ENCODE measurements at regions of chr6 and their contacts with region 1.

Region 1: GRCh38 chr6:109009236-109009961 is 85.2 kb downstream of the SESN1 start:
- DNase-seq: peak; percentile 92
- H3K4me3 Mint-ChIP-seq: peak overlapping the region; percentile 95
- H3K27ac Mint-ChIP-seq: peak overlapping the region; percentile 96
- H3K4me1 Mint-ChIP-seq: peaks cover 60% of the 10 kb centered on the region
- H3K27me3 Mint-ChIP-seq: no peaks in the 10 kb centered on the region

Region 2: DNA sequence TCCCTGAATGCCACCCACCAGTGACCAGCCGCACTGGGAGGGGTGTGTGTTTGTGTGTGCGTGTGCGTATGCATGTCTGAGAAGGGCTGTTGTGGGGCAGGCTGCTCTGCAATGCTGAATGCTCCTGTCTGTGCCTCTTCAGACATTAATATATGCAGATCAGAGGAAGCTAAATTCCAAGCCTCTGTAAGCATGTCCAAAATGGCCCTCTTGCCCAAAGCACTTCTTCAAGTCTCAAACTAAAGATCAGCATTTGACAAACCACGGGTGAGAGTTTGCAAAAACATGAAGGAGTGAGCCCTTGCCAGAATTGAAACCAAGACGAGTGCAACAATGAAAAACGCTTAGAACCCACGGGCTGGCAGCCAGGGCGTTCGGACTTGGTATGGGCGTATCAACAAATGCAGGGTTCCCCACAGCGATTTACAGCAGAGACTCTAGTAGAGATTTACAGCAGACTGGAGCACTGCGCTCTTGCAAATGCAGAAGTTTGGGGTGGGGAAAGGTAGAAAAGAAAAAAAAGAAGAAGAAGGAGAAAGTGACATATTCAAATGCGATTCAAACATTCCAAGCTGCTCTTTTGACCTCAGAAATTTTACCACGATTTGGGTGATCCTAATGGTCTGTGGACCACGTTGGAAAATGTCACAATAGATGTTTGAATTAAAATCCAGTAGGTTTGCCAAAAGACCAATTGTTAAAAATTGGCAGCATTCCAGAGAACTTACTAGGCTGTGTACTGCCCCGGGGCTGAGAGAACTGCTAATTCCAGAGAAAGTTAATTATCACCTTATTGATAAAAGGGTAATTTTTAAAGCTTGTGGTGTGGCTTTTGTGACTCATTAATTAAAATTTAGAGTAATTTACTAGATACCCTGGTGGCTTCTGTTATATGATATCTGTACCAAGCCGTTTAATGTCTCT is 1188.8 kb before region 1 on chr6:
- CTCF ChIA-PET with region 1: no interaction called
- intact Hi-C with region 1: loop called (anchors 10 kb)
- DNase-seq: peak; percentile 55
- H3K4me3 Mint-ChIP-seq: peak overlapping the region; percentile 88
- H3K27ac Mint-ChIP-seq: peak overlapping the region; percentile 98
- H3K4me1 Mint-ChIP-seq: peaks cover 83% of the 10 kb centered on the region
- H3K27me3 Mint-ChIP-seq: no peaks in the 10 kb centered on the region

Region 3: DNA sequence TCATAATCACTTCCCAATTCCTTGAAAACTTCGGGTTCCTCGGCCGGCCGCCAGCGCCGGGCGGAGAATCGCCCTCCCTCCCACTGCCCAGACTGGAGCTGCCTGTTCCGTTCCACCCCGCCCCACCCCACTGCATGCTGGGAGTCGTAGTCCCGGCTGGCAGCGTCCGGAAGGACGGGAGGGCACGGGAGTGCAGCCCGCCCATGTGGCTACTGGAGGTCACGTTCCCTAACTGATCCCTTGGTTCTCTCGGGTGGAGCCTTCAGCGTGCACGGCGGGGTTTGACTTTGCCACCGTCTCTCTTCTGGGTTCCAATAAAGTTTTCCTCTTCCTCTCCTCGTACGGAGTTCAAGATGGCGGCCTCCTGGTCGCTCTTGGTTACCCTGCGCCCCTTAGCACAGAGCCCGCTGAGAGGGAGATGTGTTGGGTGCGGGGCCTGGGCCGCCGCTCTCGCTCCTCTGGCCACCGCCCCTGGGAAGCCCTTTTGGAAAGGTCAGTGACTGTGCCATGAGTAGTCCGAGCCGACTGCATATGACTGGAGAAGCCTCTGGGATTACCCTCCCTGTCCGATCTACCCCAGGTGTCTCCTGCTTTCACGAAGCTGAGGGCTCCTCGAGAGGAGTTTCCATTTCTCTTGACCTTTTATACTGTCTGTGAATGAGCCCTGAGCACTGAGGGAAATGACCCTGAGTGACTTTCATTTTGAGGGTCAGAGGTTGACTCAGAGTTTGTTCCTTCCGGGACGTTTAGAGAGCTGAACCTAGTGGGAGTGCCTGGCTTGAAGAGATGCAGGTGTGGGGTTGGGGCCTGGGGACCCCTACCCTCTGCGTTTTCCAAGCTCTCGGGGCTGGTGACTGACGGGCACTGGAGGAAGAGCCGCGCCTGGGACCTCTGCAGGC is 714.4 kb before region 1 on chr6 and contains the start of gene AFG1L:
- CTCF ChIA-PET with region 1: no interaction called
- intact Hi-C with region 1: loop called (anchors 10 kb)
- DNase-seq: peak; percentile 91
- H3K4me3 Mint-ChIP-seq: peak within 1 kb of the TSS; percentile 99
- H3K27ac Mint-ChIP-seq: peak within 1 kb of the TSS; percentile 100
- H3K4me1 Mint-ChIP-seq: peaks cover 19% of the 10 kb centered on the region
- H3K27me3 Mint-ChIP-seq: no peaks in the 10 kb centered on the region
- total RNA-seq, gene AFG1L: 5.4 to 5.9 TPM

Region 4: DNA sequence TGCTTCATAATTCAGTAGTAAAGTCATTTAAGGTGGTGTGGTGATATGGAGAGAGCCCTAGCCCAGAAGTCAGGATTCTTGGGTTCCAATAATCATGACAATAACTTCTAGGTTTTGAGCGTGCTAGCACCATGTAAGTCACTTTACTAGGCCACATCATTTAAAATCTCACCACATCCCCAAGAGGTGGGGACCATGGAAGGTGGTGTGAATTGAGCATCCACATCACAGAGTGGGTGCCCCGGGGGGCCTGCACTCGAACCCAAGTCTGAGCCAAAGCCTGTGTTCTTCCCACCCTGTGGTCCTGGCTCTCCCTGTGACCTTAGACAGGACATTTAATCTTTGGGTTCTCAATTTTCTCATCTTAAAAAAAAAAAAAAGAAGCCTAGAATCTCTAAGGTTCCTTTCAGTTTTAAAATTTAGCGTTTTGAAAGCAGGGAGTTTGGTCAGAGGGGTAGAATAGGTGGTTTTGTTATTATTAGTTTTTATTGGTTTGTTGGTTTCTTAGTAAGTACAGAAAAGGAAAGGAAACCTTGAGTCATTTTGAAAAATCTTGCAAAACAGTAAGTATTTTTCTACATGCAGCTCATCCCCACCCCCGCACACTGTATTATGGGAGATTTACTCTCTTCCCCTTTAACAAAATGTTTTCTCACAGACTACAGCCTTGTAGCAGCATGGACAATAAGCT is 134.8 kb before region 1 on chr6:
- CTCF ChIA-PET with region 1: no interaction called
- intact Hi-C with region 1: loop called (anchors 1 kb)
- DNase-seq: peak; percentile 80
- H3K4me3 Mint-ChIP-seq: peak overlapping the region; percentile 20
- H3K27ac Mint-ChIP-seq: no peak overlapping the region
- H3K4me1 Mint-ChIP-seq: peaks cover 22% of the 10 kb centered on the region
- H3K27me3 Mint-ChIP-seq: peaks cover 2% of the 10 kb centered on the region

Region 5: GRCh38 chr6:108921547-108922361 is 87.6 kb before region 1 on chr6:
- CTCF ChIA-PET with region 1: no interaction called
- intact Hi-C with region 1: loop called (anchors 2 kb)
- DNase-seq: peak; percentile 43
- H3K4me3 Mint-ChIP-seq: no peak overlapping the region
- H3K27ac Mint-ChIP-seq: no peak overlapping the region
- H3K4me1 Mint-ChIP-seq: peaks cover 27% of the 10 kb centered on the region
- H3K27me3 Mint-ChIP-seq: no peaks in the 10 kb centered on the region

Region 6: GRCh38 chr6:109073344-109074132 is 64.1 kb after region 1 on chr6:
- CTCF ChIA-PET with region 1: interaction called, 17 read pairs
- intact Hi-C with region 1: loop called (anchors 1 kb)
- DNase-seq: peak; percentile 66
- H3K4me3 Mint-ChIP-seq: peak overlapping the region; percentile 20
- H3K27ac Mint-ChIP-seq: no peak overlapping the region
- H3K4me1 Mint-ChIP-seq: peaks cover 20% of the 10 kb centered on the region
- H3K27me3 Mint-ChIP-seq: no peaks in the 10 kb centered on the region

Region 7: DNA sequence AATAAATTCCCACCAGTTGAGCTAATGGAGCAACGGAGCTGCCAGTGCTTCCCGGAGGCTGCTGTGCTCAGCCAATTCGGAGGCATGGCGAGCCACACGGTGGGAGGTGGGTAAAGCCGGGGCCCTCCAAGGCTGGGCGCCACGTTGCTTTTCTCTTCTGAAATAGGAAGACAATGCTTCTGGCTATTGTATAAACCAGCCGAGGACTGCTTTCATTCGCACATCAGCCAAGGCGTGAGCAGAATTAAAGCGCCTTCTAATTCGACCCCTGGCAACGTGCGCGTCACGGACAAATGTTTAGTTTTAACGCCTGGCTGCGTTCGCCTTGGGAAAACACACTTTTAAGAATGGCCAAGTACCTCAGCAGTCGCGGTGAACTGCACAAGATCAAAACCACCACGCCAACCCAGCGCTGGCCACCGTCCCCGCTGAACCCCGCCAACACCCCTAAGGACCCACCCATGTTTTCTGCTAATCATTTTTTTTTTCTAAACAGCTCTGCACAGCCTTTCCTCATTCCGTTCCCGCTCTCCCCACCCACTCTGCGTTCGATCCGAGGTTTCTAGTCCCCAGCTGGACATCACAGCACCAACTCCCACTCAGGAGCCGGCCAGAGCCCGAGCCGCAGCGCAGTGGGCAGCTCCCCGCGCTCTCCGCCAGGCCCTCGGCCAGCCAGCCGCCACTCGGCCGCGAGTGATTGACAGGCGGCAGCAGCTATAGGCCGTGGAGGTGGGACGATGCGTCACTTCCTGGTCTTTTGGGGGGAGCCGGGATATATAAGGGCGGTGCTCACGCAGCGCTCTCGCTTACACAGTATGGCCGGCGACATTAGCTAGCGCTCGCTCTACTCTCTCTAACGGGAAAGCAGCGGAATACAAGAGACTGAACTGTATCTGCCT is 1864.8 kb after region 1 on chr6 and contains the start of gene AMD1:
- CTCF ChIA-PET with region 1: no interaction called
- intact Hi-C with region 1: loop called (anchors 10 kb)
- DNase-seq: peak; percentile 94
- H3K4me3 Mint-ChIP-seq: peak within 1 kb of the TSS; percentile 95
- H3K27ac Mint-ChIP-seq: peak within 1 kb of the TSS; percentile 95
- H3K4me1 Mint-ChIP-seq: peaks cover 29% of the 10 kb centered on the region
- H3K27me3 Mint-ChIP-seq: no peaks in the 10 kb centered on the region
- total RNA-seq, gene AMD1: 72.6 to 75.3 TPM

Measured in activated naive CD4-positive, alpha-beta T cell treated with anti-CD3 and anti-CD28 coated beads for 36 hours (primary cell).